Caco-2 (cell line): ENCODE measurements at regions of chr9 and their contacts with region 1.

Region 1: GRCh38 chr9:37079370-37080164 is 40.8 kb upstream of the ZCCHC7 start:
- DNase-seq: peak; percentile 95 to 96
- H3K4me3 ChIP-seq: peak overlapping the region; percentile 78
- H3K4me3 Mint-ChIP-seq: peak overlapping the region; percentile 82
- H3K27ac Mint-ChIP-seq: peak overlapping the region; percentile 85
- H3K4me1 ChIP-seq: peaks cover 7% of the 10 kb centered on the region; the same call in 1 of the 2 replicates
- H3K4me1 Mint-ChIP-seq: peaks cover 8% of the 10 kb centered on the region
- H3K27me3 ChIP-seq: no peaks in the 10 kb centered on the region
- H3K27me3 Mint-ChIP-seq: no peaks in the 10 kb centered on the region
- CTCF ChIP-seq: no peak

Region 2: GRCh38 chr9:37027582-37028419 is 51.8 kb before region 1 on chr9:
- CTCF ChIA-PET with region 1: interaction called, 5 read pairs
- POLR2A ChIA-PET with region 1: interaction called, 7 read pairs
- intact Hi-C with region 1: loop called (anchors 2 kb)
- DNase-seq: peak; percentile 98
- H3K4me3 ChIP-seq: peak overlapping the region; percentile 28
- H3K4me3 Mint-ChIP-seq: peak overlapping the region; percentile 78
- H3K27ac Mint-ChIP-seq: peak overlapping the region; percentile 23
- H3K4me1 ChIP-seq: peaks cover 5% of the 10 kb centered on the region; the same call in 1 of the 2 replicates
- H3K4me1 Mint-ChIP-seq: no peaks in the 10 kb centered on the region
- H3K27me3 ChIP-seq: no peaks in the 10 kb centered on the region; the same call in 1 of the 2 replicates
- H3K27me3 Mint-ChIP-seq: peaks cover 19% of the 10 kb centered on the region
- CTCF ChIP-seq: no peak

Region 3: GRCh38 chr9:37066139-37066725 is 13.3 kb before region 1 on chr9:
- CTCF ChIA-PET with region 1: no interaction called
- POLR2A ChIA-PET with region 1: no interaction called
- intact Hi-C with region 1: no loop called
- DNase-seq: no peak
- H3K4me3 ChIP-seq: no peak overlapping the region
- H3K4me3 Mint-ChIP-seq: no peak overlapping the region
- H3K27ac Mint-ChIP-seq: no peak overlapping the region
- H3K4me1 ChIP-seq: no peaks in the 10 kb centered on the region
- H3K4me1 Mint-ChIP-seq: no peaks in the 10 kb centered on the region
- H3K27me3 ChIP-seq: peaks cover 1% of the 10 kb centered on the region; the same call in 1 of the 2 replicates
- H3K27me3 Mint-ChIP-seq: peaks cover 18% of the 10 kb centered on the region
- CTCF ChIP-seq: no peak

Region 4: GRCh38 chr9:37309136-37309535 is 229.6 kb after region 1 on chr9:
- CTCF ChIA-PET with region 1: no interaction called
- POLR2A ChIA-PET with region 1: no interaction called
- intact Hi-C with region 1: loop called (anchors 2 kb)
- DNase-seq: peak; percentile 37 to 39
- H3K4me3 ChIP-seq: no peak overlapping the region
- H3K4me3 Mint-ChIP-seq: no peak overlapping the region
- H3K27ac Mint-ChIP-seq: no peak overlapping the region
- H3K4me1 ChIP-seq: peaks cover 6% of the 10 kb centered on the region
- H3K4me1 Mint-ChIP-seq: peaks cover 7% of the 10 kb centered on the region
- H3K27me3 ChIP-seq: no peaks in the 10 kb centered on the region
- H3K27me3 Mint-ChIP-seq: no peaks in the 10 kb centered on the region
- CTCF ChIP-seq: peak; percentile 19 to 45